ENCODE measurements at regions of chr10 and their contacts with region 1.

Region 1: DNA sequence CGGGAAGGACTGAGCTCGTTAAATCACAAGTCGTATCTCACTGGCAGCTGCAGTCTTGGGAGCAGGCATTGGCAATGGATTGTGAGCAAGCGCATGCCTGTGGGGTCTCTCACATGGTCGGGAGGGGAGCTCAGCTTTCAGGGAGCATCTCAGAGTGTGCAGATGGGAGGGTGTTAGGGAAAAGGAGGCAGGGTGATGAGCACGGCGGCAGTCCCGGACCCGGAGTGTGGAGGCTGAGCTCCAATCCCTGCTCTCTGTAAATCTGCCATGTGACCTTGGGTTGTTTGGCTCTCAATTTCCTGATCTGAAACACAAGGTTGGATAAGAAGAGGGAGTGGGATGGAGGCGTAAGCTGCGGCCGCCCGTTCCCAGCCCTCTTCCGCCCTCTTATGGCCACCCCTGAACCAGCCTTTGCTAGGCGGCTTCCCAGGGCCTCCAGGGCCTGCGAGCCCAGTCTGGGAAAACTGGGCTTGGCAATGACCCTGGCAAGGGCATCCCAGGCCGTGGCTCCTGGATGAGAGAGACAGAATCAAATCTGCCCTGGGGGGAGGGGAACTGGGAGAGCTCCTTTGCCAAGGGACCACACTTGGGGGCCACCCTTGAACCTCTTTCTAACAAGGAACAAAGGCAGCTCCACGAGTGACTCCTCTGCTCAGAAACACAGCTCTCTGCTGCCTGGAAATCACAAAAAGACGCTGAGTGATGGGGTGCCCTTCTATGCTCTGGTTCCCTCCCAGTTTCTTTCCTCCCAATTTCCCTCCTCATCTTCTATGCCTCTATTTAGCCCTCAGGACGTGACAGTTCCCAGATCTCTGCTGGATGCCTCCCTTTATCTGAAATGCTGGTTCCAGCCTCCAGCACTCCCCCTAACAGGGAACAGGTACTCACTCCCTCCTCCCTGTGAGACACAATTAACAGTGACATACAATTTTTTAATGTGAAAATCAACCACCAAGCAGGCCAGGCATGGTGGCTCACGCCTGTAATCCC is 41.7 kb upstream of the LOXL4 start:
- DNase-seq: peak; percentile 72 to 80
- H3K4me3 ChIP-seq: peak overlapping the region; percentile 3; the same call in 1 of the 2 replicates
- H3K4me3 Mint-ChIP-seq: peak overlapping the region; percentile 57
- H3K27ac Mint-ChIP-seq: peak overlapping the region; percentile 62
- H3K4me1 ChIP-seq: peaks cover 4% of the 10 kb centered on the region; the same call in 1 of the 2 replicates
- H3K4me1 Mint-ChIP-seq: no peaks in the 10 kb centered on the region
- H3K27me3 ChIP-seq: no peaks in the 10 kb centered on the region
- H3K27me3 Mint-ChIP-seq: peaks cover 8% of the 10 kb centered on the region
- CTCF ChIP-seq: peak; percentile 84 to 95

Region 2: DNA sequence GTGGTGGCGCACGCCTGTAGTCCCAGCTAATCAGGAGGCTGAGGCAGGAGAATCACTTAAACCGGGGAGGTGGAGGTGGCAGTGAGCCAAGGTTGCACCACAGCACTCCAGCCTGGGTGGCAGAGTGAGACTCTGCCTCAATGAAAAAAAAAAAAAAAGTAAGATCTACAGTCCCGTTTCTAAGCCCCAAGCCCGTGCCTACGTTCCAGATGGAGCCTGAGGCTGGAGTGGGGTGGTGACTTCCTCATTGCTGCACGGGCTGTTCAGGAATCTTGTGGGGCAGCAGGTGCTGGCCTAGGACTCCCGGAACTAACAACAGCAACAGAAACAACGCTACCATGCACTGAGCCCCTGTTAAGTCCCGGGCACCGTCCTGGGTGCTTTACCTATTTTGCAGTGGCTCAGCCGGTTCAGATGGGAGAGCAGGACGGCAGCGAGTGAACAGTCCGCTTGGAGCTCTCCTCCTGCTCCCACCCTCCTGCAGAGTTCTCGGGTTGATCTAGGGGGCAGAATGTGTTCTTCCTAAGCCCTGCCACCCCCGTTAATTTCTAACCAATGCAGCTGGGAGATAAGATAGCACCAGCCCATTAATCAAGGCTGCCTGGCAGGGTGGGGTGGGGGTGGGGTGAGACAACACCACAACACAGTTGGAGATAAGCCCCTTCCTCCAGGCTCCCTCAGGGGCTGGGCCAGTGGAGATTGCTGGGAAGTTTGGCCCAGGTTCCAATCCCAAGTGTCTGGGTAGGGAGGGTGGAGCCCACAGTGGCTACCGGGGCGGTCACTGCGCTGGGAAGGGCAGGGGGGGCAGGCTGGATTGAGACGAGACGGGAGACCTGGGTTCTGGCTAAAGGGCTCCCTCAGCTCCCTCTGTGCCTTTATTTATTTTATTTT is 520.9 kb before region 1 on chr10:
- CTCF ChIA-PET with region 1: no interaction called
- POLR2A ChIA-PET with region 1: no interaction called
- intact Hi-C with region 1: no loop called
- DNase-seq: peak; percentile 76 to 94
- H3K4me3 ChIP-seq: peak overlapping the region; percentile 49
- H3K4me3 Mint-ChIP-seq: peak overlapping the region; percentile 72
- H3K27ac Mint-ChIP-seq: peak overlapping the region; percentile 77
- H3K4me1 ChIP-seq: peaks cover 62% of the 10 kb centered on the region
- H3K4me1 Mint-ChIP-seq: peaks cover 16% of the 10 kb centered on the region
- H3K27me3 ChIP-seq: no peaks in the 10 kb centered on the region
- H3K27me3 Mint-ChIP-seq: no peaks in the 10 kb centered on the region
- CTCF ChIP-seq: peak in 1 of 2 experiments; percentile 14

Region 3: DNA sequence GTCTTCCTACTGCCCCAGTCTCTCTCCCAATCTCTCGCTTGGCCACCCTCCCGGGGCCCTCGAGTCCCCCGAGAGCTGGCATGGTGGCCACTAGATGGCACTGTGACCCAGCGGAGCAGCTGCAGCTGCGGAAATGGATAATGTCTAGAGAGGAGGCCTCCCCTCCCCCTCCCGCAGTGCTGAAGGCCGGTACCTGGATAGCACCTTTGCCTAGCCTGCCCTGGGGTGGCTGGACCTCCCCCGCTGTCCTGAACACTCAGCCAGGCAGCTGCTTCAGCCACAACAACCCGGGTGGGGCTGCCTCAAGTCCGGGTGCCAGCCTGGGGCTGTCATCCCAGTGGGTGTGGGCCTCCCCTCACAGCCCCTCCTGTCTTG is 394.8 kb before region 1 on chr10:
- CTCF ChIA-PET with region 1: interaction called, 5 read pairs
- POLR2A ChIA-PET with region 1: no interaction called
- intact Hi-C with region 1: loop called (anchors 1 kb)
- DNase-seq: peak; percentile 80 to 85
- H3K4me3 ChIP-seq: no peak overlapping the region
- H3K4me3 Mint-ChIP-seq: no peak overlapping the region
- H3K27ac Mint-ChIP-seq: no peak overlapping the region
- H3K4me1 ChIP-seq: no peaks in the 10 kb centered on the region
- H3K4me1 Mint-ChIP-seq: no peaks in the 10 kb centered on the region
- H3K27me3 ChIP-seq: peaks cover 1% of the 10 kb centered on the region; the same call in 1 of the 2 replicates
- H3K27me3 Mint-ChIP-seq: peaks cover 23% of the 10 kb centered on the region
- CTCF ChIP-seq: peak; percentile 94 to 96

Region 4: GRCh38 chr10:98170249-98171117 is 139.2 kb before region 1 on chr10:
- CTCF ChIA-PET with region 1: interaction called, 56 read pairs
- POLR2A ChIA-PET with region 1: no interaction called
- intact Hi-C with region 1: loop called (anchors 1 kb)
- DNase-seq: peak; percentile 58 to 72
- H3K4me3 ChIP-seq: no peak overlapping the region
- H3K4me3 Mint-ChIP-seq: no peak overlapping the region
- H3K27ac Mint-ChIP-seq: no peak overlapping the region
- H3K4me1 ChIP-seq: no peaks in the 10 kb centered on the region
- H3K4me1 Mint-ChIP-seq: peaks cover 12% of the 10 kb centered on the region
- H3K27me3 ChIP-seq: no peaks in the 10 kb centered on the region
- H3K27me3 Mint-ChIP-seq: no peaks in the 10 kb centered on the region
- CTCF ChIP-seq: peak; percentile 66 to 74

Region 5: DNA sequence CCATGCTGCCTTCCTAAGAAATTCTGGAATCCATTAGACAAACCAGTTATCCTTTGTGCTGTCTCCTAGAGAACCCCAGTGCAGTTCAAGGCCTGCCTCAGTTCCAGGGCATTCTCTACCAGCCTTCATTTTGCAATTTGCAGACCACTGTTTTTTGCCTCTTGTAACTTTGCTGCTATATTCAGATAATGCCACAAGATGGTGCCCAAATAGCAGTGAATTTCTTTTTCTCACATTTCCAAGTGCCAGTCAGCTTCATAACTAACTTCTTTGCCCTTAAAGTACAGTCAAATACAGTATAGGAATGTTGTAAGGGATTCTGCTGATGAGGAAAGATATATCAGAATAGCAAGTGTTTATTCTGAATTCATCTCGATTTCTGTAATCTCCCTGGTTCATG is 66.8 kb before region 1 on chr10:
- CTCF ChIA-PET with region 1: interaction called, 19 read pairs
- POLR2A ChIA-PET with region 1: no interaction called
- intact Hi-C with region 1: loop called (anchors 1 kb)
- DNase-seq: no peak
- H3K4me3 ChIP-seq: no peak overlapping the region
- H3K4me3 Mint-ChIP-seq: no peak overlapping the region
- H3K27ac Mint-ChIP-seq: no peak overlapping the region
- H3K4me1 ChIP-seq: no peaks in the 10 kb centered on the region
- H3K4me1 Mint-ChIP-seq: no peaks in the 10 kb centered on the region
- H3K27me3 ChIP-seq: no peaks in the 10 kb centered on the region
- H3K27me3 Mint-ChIP-seq: no peaks in the 10 kb centered on the region
- CTCF ChIP-seq: peak in 1 of 2 experiments; percentile 32

Region 6: DNA sequence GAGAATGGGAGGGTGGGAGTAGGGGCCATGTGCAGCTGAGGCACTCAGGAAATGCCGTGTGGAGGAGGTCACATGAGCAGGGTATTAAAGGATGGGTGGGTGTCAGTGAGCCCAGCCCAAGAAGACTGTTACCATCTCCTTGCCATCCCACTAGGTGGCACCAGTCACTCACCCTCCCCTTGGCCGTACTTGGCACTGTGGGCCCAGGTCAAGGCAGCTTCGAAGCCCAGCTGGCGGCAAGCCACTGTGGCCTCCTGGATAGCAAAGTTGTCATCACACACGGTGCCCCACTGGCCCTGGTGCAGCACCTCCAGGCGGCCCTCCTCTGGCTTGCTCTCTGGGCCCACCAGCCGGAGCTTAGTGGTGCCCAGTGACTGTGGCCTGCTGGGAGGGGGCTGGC is 47.1 kb before region 1 on chr10:
- CTCF ChIA-PET with region 1: interaction called, 10 read pairs
- POLR2A ChIA-PET with region 1: no interaction called
- intact Hi-C with region 1: loop called (anchors 1 kb)
- DNase-seq: peak in 1 of 2 experiments; percentile 30
- H3K4me3 ChIP-seq: no peak overlapping the region
- H3K4me3 Mint-ChIP-seq: no peak overlapping the region
- H3K27ac Mint-ChIP-seq: no peak overlapping the region
- H3K4me1 ChIP-seq: peaks cover 3% of the 10 kb centered on the region; the same call in 1 of the 2 replicates
- H3K4me1 Mint-ChIP-seq: peaks cover 24% of the 10 kb centered on the region
- H3K27me3 ChIP-seq: no peaks in the 10 kb centered on the region
- H3K27me3 Mint-ChIP-seq: no peaks in the 10 kb centered on the region
- CTCF ChIP-seq: no peak

Region 7: DNA sequence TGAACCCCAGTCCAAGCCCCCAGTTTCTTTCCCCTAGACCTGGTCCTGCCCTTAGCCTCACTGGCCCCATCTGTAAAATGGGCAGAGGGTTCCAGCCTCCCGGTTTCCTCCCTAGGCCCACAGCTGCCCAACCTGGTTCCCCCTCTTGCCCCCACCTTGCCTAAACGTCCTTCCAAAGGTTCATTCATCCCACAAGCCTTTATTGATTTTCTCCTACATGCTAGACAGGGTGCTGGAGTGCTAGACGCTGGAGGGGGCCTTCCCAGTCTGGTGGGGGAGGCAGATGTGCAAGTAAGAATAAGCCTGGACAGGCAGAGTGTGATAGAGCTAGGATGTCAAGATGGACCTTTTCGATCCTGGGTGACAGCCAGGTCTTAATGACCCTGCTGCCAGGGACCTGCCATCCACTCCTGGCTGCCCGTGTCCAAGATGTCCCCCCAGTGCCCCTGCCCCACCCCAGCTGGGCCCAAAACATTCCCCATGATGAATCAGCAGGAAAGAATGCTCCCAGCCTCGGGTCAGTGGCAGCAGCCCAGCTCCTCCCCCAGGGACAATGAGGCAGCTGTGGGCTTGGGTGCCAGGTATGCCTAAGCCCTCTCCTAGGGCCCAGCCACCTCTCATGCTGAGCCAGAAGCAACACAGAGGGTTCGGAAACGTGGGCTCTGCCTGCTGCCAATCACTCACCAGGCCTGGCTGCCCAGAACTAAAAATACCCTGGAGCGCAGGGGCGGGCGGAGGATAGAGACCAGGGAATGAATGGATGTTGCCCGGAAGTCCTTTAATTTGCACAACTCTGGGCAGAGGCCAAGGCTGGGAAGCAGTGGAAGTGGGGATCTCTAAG is 40.4 kb before region 1 on chr10:
- CTCF ChIA-PET with region 1: interaction called, 10 read pairs
- POLR2A ChIA-PET with region 1: interaction called, 3 read pairs
- intact Hi-C with region 1: loop called (anchors 2 kb)
- DNase-seq: peak; percentile 67 to 79
- H3K4me3 ChIP-seq: no peak overlapping the region; the same call in 1 of the 2 replicates
- H3K4me3 Mint-ChIP-seq: peak overlapping the region; percentile 75
- H3K27ac Mint-ChIP-seq: peak overlapping the region; percentile 77
- H3K4me1 ChIP-seq: peaks cover 28% of the 10 kb centered on the region
- H3K4me1 Mint-ChIP-seq: peaks cover 31% of the 10 kb centered on the region
- H3K27me3 ChIP-seq: no peaks in the 10 kb centered on the region
- H3K27me3 Mint-ChIP-seq: no peaks in the 10 kb centered on the region
- CTCF ChIP-seq: no peak